ENCODE measurements at regions of chr5 and their contacts with region 1.

Region 1: GRCh38 chr5:64784451-64785025 is 15.8 kb downstream of the CWC27 start:
- DNase-seq: peak; percentile 89
- H3K4me3 Mint-ChIP-seq: no peak overlapping the region
- H3K27ac Mint-ChIP-seq: no peak overlapping the region
- H3K4me1 Mint-ChIP-seq: peaks cover 4% of the 10 kb centered on the region
- H3K27me3 Mint-ChIP-seq: no peaks in the 10 kb centered on the region

Region 2: GRCh38 chr5:64074533-64074932 is 710.0 kb before region 1 on chr5:
- CTCF ChIA-PET with region 1: no interaction called
- intact Hi-C with region 1: loop called (anchors 5 kb)
- DNase-seq: peak; percentile 5
- H3K4me3 Mint-ChIP-seq: no peak overlapping the region
- H3K27ac Mint-ChIP-seq: no peak overlapping the region
- H3K4me1 Mint-ChIP-seq: no peaks in the 10 kb centered on the region
- H3K27me3 Mint-ChIP-seq: no peaks in the 10 kb centered on the region

Region 3: GRCh38 chr5:64229163-64229774 is 555.3 kb before region 1 on chr5:
- CTCF ChIA-PET with region 1: interaction called, 3 read pairs
- intact Hi-C with region 1: loop called (anchors 1 kb)
- DNase-seq: no peak
- H3K4me3 Mint-ChIP-seq: no peak overlapping the region
- H3K27ac Mint-ChIP-seq: no peak overlapping the region
- H3K4me1 Mint-ChIP-seq: no peaks in the 10 kb centered on the region
- H3K27me3 Mint-ChIP-seq: no peaks in the 10 kb centered on the region

Region 4: DNA sequence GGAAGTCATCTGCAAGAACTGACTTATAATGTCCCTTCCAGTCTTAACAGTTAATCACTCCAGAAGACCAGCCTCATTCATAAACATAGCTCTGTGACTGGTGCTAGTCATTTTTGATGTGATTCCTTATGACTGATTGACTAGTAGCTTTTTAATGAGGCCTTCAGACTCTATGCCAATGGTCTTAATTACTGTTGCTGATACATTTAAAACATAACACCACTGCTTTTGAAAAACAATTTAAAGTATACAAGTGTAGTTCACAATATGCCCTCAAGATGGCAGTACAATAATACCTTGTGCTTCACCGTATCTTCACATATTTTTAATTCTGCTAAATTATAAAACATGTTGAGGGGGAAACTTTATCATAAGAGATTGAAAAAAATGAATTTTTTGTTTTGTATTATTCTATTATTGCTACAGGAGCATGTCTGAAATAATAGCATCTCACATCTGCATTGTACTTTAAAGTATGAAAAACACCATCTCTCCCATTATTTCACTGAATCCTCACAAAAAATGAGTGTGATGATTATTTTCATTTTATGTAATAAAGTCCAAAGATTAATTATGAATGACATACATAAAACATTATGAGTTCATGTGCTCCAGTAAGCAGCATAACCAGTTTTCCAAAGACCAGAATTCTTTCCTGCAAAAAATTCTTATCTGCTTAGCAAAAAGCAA is 149.4 kb before region 1 on chr5:
- CTCF ChIA-PET with region 1: interaction called, 32 read pairs
- intact Hi-C with region 1: loop called (anchors 1 kb)
- DNase-seq: no peak
- H3K4me3 Mint-ChIP-seq: no peak overlapping the region
- H3K27ac Mint-ChIP-seq: no peak overlapping the region
- H3K4me1 Mint-ChIP-seq: peaks cover 3% of the 10 kb centered on the region
- H3K27me3 Mint-ChIP-seq: peaks cover 13% of the 10 kb centered on the region

Region 5: DNA sequence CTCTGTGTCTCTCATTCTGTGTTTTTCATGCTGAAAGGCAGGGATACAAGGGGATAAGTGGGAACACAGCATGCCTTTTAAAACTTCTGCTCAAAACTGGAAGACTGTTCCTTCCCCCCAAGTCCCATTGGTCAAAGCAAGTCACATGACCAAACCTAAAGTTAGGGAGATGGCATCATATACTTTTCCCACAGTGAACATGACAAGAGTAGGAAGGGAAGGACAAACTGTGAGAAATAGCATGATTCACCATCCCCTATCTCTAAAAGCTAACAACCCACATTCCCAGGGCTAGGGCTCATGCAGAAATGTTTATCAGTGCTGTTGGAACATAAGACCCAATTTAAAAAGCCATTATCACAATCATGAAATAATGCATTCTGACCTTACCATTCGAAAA is 118.5 kb before region 1 on chr5:
- CTCF ChIA-PET with region 1: no interaction called
- intact Hi-C with region 1: no loop called
- DNase-seq: no peak
- H3K4me3 Mint-ChIP-seq: no peak overlapping the region
- H3K27ac Mint-ChIP-seq: no peak overlapping the region
- H3K4me1 Mint-ChIP-seq: no peaks in the 10 kb centered on the region
- H3K27me3 Mint-ChIP-seq: peaks cover 10% of the 10 kb centered on the region

Region 6: DNA sequence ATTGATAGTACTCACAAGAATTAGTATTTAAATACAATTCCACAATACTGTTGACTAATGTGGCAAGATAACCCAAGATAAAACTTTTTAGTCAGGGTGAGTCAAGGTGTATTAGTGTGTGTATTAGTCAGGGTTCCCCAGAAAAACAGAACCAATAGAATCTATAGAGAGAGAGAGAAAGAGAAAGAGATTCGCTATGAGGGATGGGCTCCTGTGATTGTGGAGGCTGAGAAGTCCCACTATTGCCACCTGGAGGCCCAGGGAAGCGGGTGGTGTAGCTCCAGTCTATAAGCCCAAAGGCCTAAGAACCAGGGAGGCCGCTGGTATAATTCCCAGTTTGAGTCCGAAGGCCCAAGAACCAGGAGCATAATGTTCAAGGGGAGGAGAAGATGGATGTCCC is 104.2 kb before region 1 on chr5:
- CTCF ChIA-PET with region 1: no interaction called
- intact Hi-C with region 1: loop called (anchors 5 kb)
- DNase-seq: no peak
- H3K4me3 Mint-ChIP-seq: no peak overlapping the region
- H3K27ac Mint-ChIP-seq: no peak overlapping the region
- H3K4me1 Mint-ChIP-seq: no peaks in the 10 kb centered on the region
- H3K27me3 Mint-ChIP-seq: peaks cover 19% of the 10 kb centered on the region

Region 7: GRCh38 chr5:64818245-64818644 is 33.7 kb after region 1 on chr5:
- CTCF ChIA-PET with region 1: no interaction called
- intact Hi-C with region 1: no loop called
- DNase-seq: no peak
- H3K4me3 Mint-ChIP-seq: no peak overlapping the region
- H3K27ac Mint-ChIP-seq: no peak overlapping the region
- H3K4me1 Mint-ChIP-seq: peaks cover 12% of the 10 kb centered on the region
- H3K27me3 Mint-ChIP-seq: no peaks in the 10 kb centered on the region

Region 8: GRCh38 chr5:64977779-64978178 is 193.2 kb after region 1 on chr5:
- CTCF ChIA-PET with region 1: no interaction called
- intact Hi-C with region 1: no loop called
- DNase-seq: no peak
- H3K4me3 Mint-ChIP-seq: no peak overlapping the region
- H3K27ac Mint-ChIP-seq: no peak overlapping the region
- H3K4me1 Mint-ChIP-seq: no peaks in the 10 kb centered on the region
- H3K27me3 Mint-ChIP-seq: no peaks in the 10 kb centered on the region

Measured in activated naive CD4-positive, alpha-beta T cell treated with anti-CD3 and anti-CD28 coated beads for 36 hours (primary cell).